HEK293 (cell line): ENCODE measurements at regions of chr19 and their contacts with region 1.

Region 1: DNA sequence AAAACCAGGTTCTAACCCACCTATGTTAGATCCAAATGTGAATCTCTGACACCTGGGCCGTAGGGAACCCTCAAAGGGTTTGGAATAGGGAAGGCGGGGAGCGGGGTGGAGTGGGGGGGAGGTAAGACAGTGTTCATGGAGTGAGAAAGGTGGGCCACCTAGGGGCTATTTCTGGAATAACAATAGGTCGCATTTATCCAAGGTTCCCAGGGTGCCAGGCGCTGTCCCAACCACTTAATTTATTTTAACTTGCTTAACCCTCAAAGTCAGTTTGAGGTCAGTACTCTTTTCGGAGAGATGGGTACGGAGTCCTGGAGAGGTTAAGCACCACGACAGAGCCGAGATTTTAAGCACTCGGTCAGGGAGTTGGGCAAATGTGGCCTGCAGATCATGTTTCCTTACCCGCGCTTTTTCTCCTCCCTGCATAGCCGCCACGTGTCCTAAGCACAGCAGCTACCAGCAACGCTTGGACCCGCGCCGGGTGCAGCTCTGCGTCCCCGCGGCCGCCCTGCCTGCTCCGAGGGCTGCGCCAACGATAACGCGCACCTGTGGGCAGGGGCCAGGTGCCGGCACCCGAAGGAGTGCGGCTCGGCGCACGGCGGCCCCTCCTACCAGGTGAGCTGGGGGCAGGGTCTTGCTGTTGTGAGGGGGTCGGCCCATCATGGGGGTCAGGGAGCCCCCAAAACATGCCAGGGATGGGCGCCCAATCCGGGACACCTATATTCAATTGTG is 25.0 kb upstream of the FXYD3 start:
- H3K4me3 ChIP-seq: no peak overlapping the region
- H3K27ac ChIP-seq: no peak overlapping the region; the same call in 1 of the 2 replicates
- H3K4me1 ChIP-seq: peaks cover 7% of the 10 kb centered on the region
- CTCF ChIP-seq: peak; percentile 86

Region 2: DNA sequence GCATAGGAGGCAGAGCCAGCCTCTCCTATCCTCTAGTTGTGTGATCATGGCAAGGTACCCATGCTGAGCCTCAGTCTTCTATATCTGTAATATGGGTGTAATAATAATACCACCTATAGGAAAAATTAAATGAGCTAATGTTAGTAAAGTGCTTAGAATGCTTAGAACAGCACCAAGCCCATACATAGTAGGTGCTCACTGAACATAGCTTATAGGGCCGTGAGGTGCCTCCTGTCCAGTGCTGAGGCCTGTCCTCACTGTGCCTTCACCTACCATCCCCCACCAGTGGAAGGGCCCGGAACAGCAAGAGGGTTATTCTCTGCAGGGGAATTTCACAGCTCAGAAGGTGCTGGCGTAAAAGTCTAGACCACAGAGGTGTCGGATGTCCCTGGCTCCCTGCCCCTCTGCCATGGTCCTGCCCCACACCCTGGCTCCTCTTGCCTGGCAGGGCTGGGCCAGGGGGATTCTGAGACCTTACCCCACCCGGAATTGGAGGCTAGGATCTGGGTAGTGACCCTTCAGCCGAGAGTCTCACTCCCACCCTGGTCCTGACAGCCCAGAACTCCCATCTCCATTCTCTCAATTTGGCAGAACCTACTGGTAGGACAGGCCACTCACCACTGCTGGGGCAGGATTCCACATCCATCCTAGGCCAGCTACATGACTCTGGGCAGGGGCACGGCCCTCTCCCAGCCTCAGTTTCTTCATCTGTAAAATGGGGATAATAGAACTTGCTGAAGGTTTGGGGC is 62.6 kb before region 1 on chr19:
- CTCF ChIA-PET with region 1: no interaction called
- POLR2A ChIA-PET with region 1: no interaction called
- H3K4me3 ChIP-seq: no peak overlapping the region
- H3K27ac ChIP-seq: no peak overlapping the region; the same call in 1 of the 2 replicates
- H3K4me1 ChIP-seq: peaks cover 14% of the 10 kb centered on the region
- CTCF ChIP-seq: no peak

Region 3: GRCh38 chr19:35055715-35056179 is 34.9 kb before region 1 on chr19:
- CTCF ChIA-PET with region 1: interaction called, 23 read pairs
- POLR2A ChIA-PET with region 1: no interaction called
- H3K4me3 ChIP-seq: no peak overlapping the region
- H3K27ac ChIP-seq: no peak overlapping the region
- H3K4me1 ChIP-seq: peaks cover 7% of the 10 kb centered on the region; the same call in 1 of the 2 replicates
- CTCF ChIP-seq: peak; percentile 89

Region 4: GRCh38 chr19:35107546-35107945 is 16.9 kb after region 1 on chr19:
- CTCF ChIA-PET with region 1: interaction called, 10 read pairs
- POLR2A ChIA-PET with region 1: no interaction called
- H3K4me3 ChIP-seq: no peak overlapping the region
- H3K27ac ChIP-seq: no peak overlapping the region
- H3K4me1 ChIP-seq: no peaks in the 10 kb centered on the region
- CTCF ChIP-seq: no peak